H1 (cell line): ENCODE measurements at regions of chr1 and their contacts with region 1.

Region 1: DNA sequence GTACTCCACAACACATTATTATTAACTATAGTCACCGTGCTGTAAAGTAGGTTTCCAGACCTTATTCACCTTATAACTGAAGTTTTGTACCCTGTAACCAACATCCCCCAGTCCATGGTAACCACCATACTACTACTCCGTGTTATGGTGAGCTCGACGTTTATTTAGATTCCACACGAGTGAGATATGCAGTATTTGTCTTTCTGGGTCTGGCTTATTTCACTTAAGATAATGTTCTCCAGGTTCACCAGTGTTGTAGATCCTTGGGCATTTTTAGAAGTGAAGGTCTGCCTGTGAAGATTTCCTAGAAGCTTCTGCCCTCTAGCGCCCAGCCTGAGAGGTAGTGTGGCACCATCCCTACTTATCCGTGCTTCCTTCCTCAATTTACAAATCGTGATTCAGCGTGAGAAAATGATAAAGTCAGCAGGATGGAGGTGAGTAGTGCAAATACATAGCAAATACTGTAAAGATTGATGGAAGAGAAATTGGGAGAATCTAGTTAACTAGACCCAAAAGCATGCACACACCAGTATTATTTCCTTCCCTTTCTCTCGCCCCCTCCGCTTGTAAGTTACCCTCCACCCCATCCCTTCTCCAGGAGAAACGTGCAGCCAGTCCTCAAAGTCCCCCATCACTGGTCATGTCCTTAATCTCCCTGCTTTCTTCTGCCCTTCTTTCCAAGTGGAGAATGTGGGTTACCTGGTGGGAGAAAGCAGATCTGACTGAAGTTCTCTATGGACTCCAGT is 36.0 kb upstream of the DISC1 start:
- DNase-seq: peak in 1 of 2 experiments; percentile 52
- H3K4me3 ChIP-seq: no peak overlapping the region
- H3K27ac ChIP-seq: no peak overlapping the region
- H3K4me1 ChIP-seq: no peaks in the 10 kb centered on the region
- H3K27me3 ChIP-seq: peaks cover 0 to 1% (median 0%) of the 10 kb centered on the region in 4 experiments; a peak in 1 of 7 replicates
- CTCF ChIP-seq: peak; percentile 50 to 89 (median 80)
- EP300 ChIP-seq: no peak
- POLR2A ChIP-seq: no peak
- RAD21 ChIP-seq: peak; percentile 92 to 93

Region 2: DNA sequence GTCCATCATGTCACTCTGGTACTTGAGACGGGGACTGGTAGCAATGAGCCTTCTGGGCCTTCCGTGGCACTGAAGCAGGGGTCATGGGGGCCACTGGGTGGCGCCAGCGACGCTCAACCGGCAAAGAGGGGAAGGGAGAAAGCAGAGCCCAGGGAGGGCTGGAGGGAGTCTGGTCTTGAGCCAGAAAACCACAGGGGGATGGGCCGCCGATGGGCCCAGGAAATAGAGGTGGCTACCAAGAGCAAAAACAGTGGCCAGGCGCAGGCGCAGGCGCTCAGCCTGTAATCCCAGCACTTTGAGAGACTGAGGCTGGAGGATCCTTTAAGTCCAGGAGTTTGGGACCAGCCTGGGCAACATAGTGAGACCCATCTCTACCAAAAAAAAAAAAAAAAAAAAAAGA is 274.7 kb before region 1 on chr1:
- CTCF ChIA-PET with region 1: interaction called, 23 read pairs
- POLR2A ChIA-PET with region 1: no interaction called
- DNase-seq: peak; percentile 47 to 81
- H3K4me3 ChIP-seq: no peak overlapping the region
- H3K27ac ChIP-seq: no peak overlapping the region
- H3K4me1 ChIP-seq: no peaks in the 10 kb centered on the region
- H3K27me3 ChIP-seq: no peaks in the 10 kb centered on the region
- CTCF ChIP-seq: peak; percentile 76 to 90 (median 81)
- EP300 ChIP-seq: no peak
- POLR2A ChIP-seq: no peak
- RAD21 ChIP-seq: peak; percentile 73 to 77

Region 3: GRCh38 chr1:231357831-231358354 is 232.7 kb before region 1 on chr1:
- CTCF ChIA-PET with region 1: interaction called, 12 read pairs
- POLR2A ChIA-PET with region 1: interaction called, 4 read pairs
- DNase-seq: no peak
- H3K4me3 ChIP-seq: no peak overlapping the region
- H3K27ac ChIP-seq: no peak overlapping the region
- H3K4me1 ChIP-seq: no peaks in the 10 kb centered on the region
- H3K27me3 ChIP-seq: no peaks in the 10 kb centered on the region
- CTCF ChIP-seq: peak in 2 of 3 experiments; percentile 72 to 86; a peak in 3 of 4 replicates
- EP300 ChIP-seq: no peak
- POLR2A ChIP-seq: no peak
- RAD21 ChIP-seq: peak; percentile 92 to 95